ENCODE measurements at regions of chr6 and their contacts with region 1.

Region 1: DNA sequence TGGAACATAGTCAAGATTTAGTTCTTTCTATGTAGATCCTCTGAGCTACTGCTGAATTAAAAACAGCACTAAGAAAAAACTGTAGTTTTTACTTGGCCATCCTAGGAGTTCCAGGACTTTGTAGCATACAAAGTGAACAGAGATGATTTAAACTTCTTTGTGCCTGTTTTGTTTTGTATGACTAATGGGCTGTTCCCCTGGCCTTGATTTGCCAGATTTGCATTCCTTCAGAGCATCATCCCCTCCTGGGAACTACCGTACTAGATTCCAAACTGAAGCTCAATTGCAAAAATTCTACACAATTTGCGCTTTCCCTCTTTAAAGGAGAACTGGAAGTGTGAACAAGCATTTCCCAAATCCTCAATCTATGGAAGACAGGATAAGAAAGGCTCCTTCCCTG is 23.1 kb downstream of the ACOT13 start:
- DNase-seq: no peak
- H3K4me3 ChIP-seq: no peak overlapping the region
- H3K27ac ChIP-seq: no peak overlapping the region
- H3K4me1 ChIP-seq: no peaks in the 10 kb centered on the region
- H3K27me3 ChIP-seq: no peaks in the 10 kb centered on the region
- CTCF ChIP-seq: no peak
- POLR2A ChIP-seq: no peak

Region 2: GRCh38 chr6:24283043-24283985 is 406.6 kb before region 1 on chr6:
- CTCF ChIA-PET with region 1: no interaction called
- POLR2A ChIA-PET with region 1: no interaction called
- dilution Hi-C with region 1: no loop called
- intact Hi-C with region 1: loop called (anchors 10 kb)
- DNase-seq: peak; percentile 79
- H3K4me3 ChIP-seq: no peak overlapping the region
- H3K27ac ChIP-seq: no peak overlapping the region
- H3K4me1 ChIP-seq: no peaks in the 10 kb centered on the region
- H3K27me3 ChIP-seq: no peaks in the 10 kb centered on the region
- CTCF ChIP-seq: peak; percentile 43 to 57
- POLR2A ChIP-seq: no peak

Region 3: DNA sequence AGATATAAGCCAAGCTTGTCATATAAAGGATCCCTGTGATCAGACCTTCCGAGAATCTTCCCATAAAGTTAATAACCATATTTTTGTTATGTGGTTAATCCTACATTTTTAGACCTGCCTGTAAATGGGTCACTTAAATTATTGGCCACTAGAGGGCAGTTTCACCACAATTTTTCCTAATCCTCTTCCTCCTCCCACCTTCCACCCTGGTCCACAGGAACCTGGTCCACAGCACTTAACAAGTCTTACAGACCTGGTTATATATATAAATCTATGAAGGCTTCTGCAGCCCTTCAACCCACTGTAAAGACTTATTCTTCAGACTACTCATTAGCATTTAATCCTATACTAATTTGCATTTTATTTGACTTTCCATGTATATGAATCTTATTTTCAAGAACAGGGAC is 258.9 kb before region 1 on chr6:
- CTCF ChIA-PET with region 1: interaction called, 5 read pairs
- POLR2A ChIA-PET with region 1: no interaction called
- dilution Hi-C with region 1: no loop called
- intact Hi-C with region 1: loop called (anchors 1 kb)
- DNase-seq: peak; percentile 55
- H3K4me3 ChIP-seq: no peak overlapping the region
- H3K27ac ChIP-seq: no peak overlapping the region
- H3K4me1 ChIP-seq: no peaks in the 10 kb centered on the region
- H3K27me3 ChIP-seq: no peaks in the 10 kb centered on the region
- CTCF ChIP-seq: peak; percentile 50 to 60
- POLR2A ChIP-seq: no peak

Region 4: GRCh38 chr6:24520929-24521546 is 168.9 kb before region 1 on chr6:
- CTCF ChIA-PET with region 1: no interaction called
- POLR2A ChIA-PET with region 1: no interaction called
- dilution Hi-C with region 1: no loop called
- intact Hi-C with region 1: loop called (anchors 2 kb)
- DNase-seq: peak; percentile 28
- H3K4me3 ChIP-seq: no peak overlapping the region
- H3K27ac ChIP-seq: no peak overlapping the region
- H3K4me1 ChIP-seq: no peaks in the 10 kb centered on the region
- H3K27me3 ChIP-seq: no peaks in the 10 kb centered on the region
- CTCF ChIP-seq: peak; percentile 60 to 78
- POLR2A ChIP-seq: no peak

Region 5: GRCh38 chr6:24666641-24667377 is 23.2 kb before region 1 on chr6 and contains the starts of genes ACOT13 and TDP2:
- CTCF ChIA-PET with region 1: interaction called, 3 read pairs
- POLR2A ChIA-PET with region 1: no interaction called
- dilution Hi-C with region 1: no loop called
- intact Hi-C with region 1: loop called (anchors 1 kb)
- DNase-seq: peak; percentile 98
- H3K4me3 ChIP-seq: peak within 1 kb of the TSS; percentile 71 to 92 (median 90)
- H3K27ac ChIP-seq: peak within 1 kb of the TSS; percentile 75
- H3K4me1 ChIP-seq: peaks cover 13% of the 10 kb centered on the region
- H3K27me3 ChIP-seq: no peaks in the 10 kb centered on the region
- CTCF ChIP-seq: peak; percentile 34 to 68
- POLR2A ChIP-seq: peak; percentile 83
- total RNA-seq, gene ACOT13: 15.3 and 24.1 TPM in 2 replicates
- total RNA-seq, gene TDP2: 35.3 and 39.2 TPM in 2 replicates

Region 6: DNA sequence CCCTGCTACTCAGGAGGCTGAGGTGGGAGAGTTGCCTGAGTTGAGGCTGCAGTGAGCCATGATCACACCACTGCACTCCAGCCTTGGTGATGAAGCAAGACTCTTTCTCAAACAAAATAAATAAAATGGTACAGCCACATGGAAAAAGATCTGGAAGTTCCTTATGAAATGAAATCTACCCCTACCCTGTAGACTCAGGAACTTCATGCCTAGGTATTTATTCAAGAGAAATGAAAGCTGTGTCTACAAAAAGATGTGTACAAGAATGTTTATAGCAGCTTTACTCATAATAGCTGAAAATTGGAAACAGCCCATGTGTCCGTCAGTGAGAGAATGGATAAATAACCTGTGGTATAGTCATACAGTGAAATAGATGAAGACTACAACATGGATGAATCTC is 44.2 kb after region 1 on chr6:
- CTCF ChIA-PET with region 1: no interaction called
- POLR2A ChIA-PET with region 1: no interaction called
- dilution Hi-C with region 1: no loop called
- intact Hi-C with region 1: no loop called
- DNase-seq: no peak
- H3K4me3 ChIP-seq: no peak overlapping the region
- H3K27ac ChIP-seq: no peak overlapping the region
- H3K4me1 ChIP-seq: peaks cover 7% of the 10 kb centered on the region
- H3K27me3 ChIP-seq: no peaks in the 10 kb centered on the region
- CTCF ChIP-seq: no peak
- POLR2A ChIP-seq: no peak

Region 7: GRCh38 chr6:24766680-24767462 is 76.9 kb after region 1 on chr6:
- CTCF ChIA-PET with region 1: no interaction called
- POLR2A ChIA-PET with region 1: no interaction called
- dilution Hi-C with region 1: no loop called
- intact Hi-C with region 1: loop called (anchors 2 kb)
- DNase-seq: peak; percentile 44
- H3K4me3 ChIP-seq: no peak overlapping the region
- H3K27ac ChIP-seq: no peak overlapping the region
- H3K4me1 ChIP-seq: no peaks in the 10 kb centered on the region
- H3K27me3 ChIP-seq: no peaks in the 10 kb centered on the region
- CTCF ChIP-seq: peak; percentile 17 to 31
- POLR2A ChIP-seq: no peak